Left colon (tissue), 2 donors: ENCODE measurements at regions of chr10 and their contacts with region 1.

Region 1: GRCh38 chr10:99845837-99846382 is 63.5 kb downstream of the ABCC2 start:
- DNase-seq: peak; percentile 67 to 75
- ATAC-seq: peak; percentile 89

Region 2: DNA sequence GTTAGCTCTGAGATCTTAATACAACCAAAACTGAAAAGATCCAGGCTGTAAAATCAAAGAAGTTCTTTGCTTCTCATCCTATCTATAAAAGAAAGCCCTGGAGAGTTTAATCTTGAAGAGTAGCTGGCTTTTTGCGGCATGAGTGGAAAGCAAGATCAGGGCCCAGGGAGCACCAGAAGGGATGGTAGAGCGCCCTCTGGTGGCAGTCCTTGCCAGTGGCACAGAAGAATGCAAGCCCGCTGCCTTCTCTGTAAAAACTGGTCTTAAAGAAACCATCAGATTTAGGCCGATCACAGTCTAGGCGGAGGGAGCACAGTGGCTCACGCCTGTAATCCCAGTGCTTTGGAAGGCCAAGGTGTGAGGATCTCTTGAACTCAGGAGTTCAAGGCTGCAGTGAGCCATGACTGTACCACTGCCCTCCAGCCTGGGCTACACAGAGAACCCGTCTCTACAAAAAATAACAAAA is 200.1 kb after region 1 on chr10:
- intact Hi-C with region 1: loop called (anchors 2 to 5 kb)
- DNase-seq: peak; percentile 70 to 94
- ATAC-seq: peak; percentile 85